Activated CD4-positive, alpha-beta T cell treated with anti-CD3 and anti-CD28 coated beads, Interleukin-2, amount 10 ng/mL, durations not matched to agents 24 days and 14 days (primary cell): ENCODE measurements at regions of chr10 and their contacts with region 1.

Region 1: GRCh38 chr10:102450194-102450938 is 977 bp downstream of the C10orf95 start:
- DNase-seq: peak; percentile 97
- H3K4me3 Mint-ChIP-seq: peak overlapping the region; percentile 98
- H3K27ac Mint-ChIP-seq: peak overlapping the region; percentile 97
- H3K4me1 Mint-ChIP-seq: peaks cover 29% of the 10 kb centered on the region
- H3K27me3 Mint-ChIP-seq: no peaks in the 10 kb centered on the region

Region 2: GRCh38 chr10:102461187-102462054 is 11.1 kb after region 1 on chr10:
- intact Hi-C with region 1: loop called (anchors 1 kb)
- DNase-seq: peak; percentile 98
- H3K4me3 Mint-ChIP-seq: peak overlapping the region; percentile 88
- H3K27ac Mint-ChIP-seq: peak overlapping the region; percentile 88
- H3K4me1 Mint-ChIP-seq: peaks cover 28% of the 10 kb centered on the region
- H3K27me3 Mint-ChIP-seq: peaks cover 6% of the 10 kb centered on the region